PC-9 (cell line): ENCODE measurements at regions of chr1 and their contacts with region 1.

Region 1: GRCh38 chr1:198937231-198938031 is 298.6 kb downstream of the PTPRC start:
- DNase-seq: peak; percentile 41 to 72
- H3K4me3 ChIP-seq: peak overlapping the region; percentile 50
- H3K27ac ChIP-seq: 0 out of 2 replicates have a peak overlapping the region, but pooled peaks have one; percentile 24
- H3K4me1 ChIP-seq: peaks cover 14% of the 10 kb centered on the region
- H3K27me3 ChIP-seq: no peaks in the 10 kb centered on the region
- CTCF ChIP-seq: no peak

Region 2: GRCh38 chr1:198651650-198652400 is 285.6 kb before region 1 on chr1:
- CTCF ChIA-PET with region 1: no interaction called
- POLR2A ChIA-PET with region 1: interaction called, 13 read pairs
- intact Hi-C with region 1: no loop called
- DNase-seq: no peak
- H3K4me3 ChIP-seq: no peak overlapping the region
- H3K27ac ChIP-seq: no peak overlapping the region
- H3K4me1 ChIP-seq: peaks cover 8% of the 10 kb centered on the region
- H3K27me3 ChIP-seq: no peaks in the 10 kb centered on the region
- CTCF ChIP-seq: no peak

Region 3: DNA sequence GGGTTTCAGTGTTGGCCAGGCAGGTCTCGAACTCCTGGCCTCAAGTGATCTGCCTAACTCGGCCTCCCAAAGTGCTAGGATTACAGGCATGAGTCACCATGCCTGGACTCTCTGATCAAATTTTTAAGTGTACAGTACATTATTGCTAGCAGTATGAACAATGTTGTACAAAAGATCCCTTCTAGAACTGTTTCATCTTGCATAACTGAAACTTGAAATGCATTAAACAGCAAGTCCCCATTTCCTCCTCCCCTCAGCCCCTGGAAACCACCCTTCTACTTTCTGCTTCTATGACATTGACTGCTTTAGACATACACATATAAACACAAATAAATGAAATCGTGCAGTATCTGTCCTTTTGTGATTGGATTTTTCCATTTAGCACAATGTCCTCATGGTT is 164.8 kb after region 1 on chr1:
- CTCF ChIA-PET with region 1: no interaction called
- POLR2A ChIA-PET with region 1: interaction called, 10 read pairs
- intact Hi-C with region 1: no loop called
- DNase-seq: no peak
- H3K4me3 ChIP-seq: no peak overlapping the region
- H3K27ac ChIP-seq: no peak overlapping the region
- H3K4me1 ChIP-seq: no peaks in the 10 kb centered on the region
- H3K27me3 ChIP-seq: no peaks in the 10 kb centered on the region
- CTCF ChIP-seq: no peak

Region 4: DNA sequence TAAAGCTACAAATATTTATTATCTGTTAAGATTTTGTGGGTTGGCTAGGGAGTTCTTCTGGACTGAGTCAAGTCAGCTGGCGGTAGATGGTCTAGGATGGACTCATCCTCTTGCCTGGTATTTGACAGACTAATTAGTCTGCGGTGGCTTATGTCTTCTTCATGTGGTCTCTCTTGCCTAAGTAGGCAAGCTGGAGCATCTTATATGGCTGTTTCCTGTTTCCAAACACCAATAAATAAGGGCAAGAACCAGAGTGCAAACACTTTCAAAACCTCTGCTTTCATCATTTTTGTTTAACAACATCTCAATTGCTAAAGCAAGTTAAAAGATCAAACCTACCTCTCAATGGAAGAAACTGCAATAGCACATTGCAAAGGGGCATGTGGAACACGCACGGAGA is 186.2 kb after region 1 on chr1:
- CTCF ChIA-PET with region 1: no interaction called
- POLR2A ChIA-PET with region 1: no interaction called
- intact Hi-C with region 1: no loop called
- DNase-seq: no peak
- H3K4me3 ChIP-seq: no peak overlapping the region
- H3K27ac ChIP-seq: no peak overlapping the region
- H3K4me1 ChIP-seq: no peaks in the 10 kb centered on the region
- H3K27me3 ChIP-seq: no peaks in the 10 kb centered on the region
- CTCF ChIP-seq: no peak

Region 5: DNA sequence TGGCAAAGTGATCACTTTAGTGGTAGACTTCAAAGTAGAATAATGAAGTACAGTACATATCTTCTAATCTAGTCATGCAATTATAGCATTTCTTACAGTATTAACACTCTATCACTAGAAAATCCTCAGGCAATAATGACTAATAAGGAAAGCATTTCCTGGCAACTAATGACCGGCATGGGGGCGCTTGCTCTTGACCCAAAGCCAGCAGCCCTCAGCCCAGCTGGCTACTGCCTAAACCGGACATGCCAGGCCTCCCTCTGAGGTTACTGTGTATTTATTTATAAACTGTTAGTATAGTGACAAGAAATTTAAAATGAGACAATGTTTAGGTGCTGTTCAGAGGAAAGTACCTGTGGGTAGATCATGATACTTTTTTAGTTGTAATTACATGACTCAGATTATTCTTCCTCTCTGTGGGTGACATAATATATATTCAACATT is 335.2 kb after region 1 on chr1:
- CTCF ChIA-PET with region 1: no interaction called
- POLR2A ChIA-PET with region 1: no interaction called
- intact Hi-C with region 1: loop called (anchors 1 kb)
- DNase-seq: peak; percentile 89 to 96
- H3K4me3 ChIP-seq: no peak overlapping the region
- H3K27ac ChIP-seq: peak overlapping the region; percentile 98
- H3K4me1 ChIP-seq: peaks cover 52% of the 10 kb centered on the region
- H3K27me3 ChIP-seq: no peaks in the 10 kb centered on the region
- CTCF ChIP-seq: no peak

Region 6: DNA sequence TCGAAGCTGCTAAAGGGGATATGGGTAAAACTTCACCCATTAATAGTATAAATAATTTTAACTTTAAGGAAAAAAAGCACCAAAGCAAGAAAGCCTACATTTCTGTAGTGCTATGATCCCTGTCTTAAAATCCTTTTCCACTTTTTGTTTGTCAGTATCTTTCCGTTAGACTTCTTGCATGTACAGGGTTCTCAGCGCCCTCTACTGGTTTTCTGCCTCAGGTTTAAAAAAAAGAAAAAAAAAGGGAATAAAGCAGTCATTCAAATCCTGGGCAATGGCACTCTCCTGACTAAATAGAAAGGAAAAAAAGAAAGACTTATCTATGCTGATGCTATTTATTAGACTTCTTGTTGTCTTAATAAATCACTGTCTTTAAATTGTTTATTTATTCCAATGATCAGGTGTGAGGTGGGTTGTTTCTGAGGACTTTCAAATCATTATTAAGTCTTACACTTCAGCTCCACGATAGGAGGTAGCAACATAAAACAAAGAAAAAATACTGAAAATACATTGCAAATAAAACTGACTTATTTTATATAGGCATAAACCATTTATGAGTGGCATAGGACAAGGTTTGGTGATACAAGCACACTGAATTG is 614.6 kb after region 1 on chr1:
- CTCF ChIA-PET with region 1: no interaction called
- POLR2A ChIA-PET with region 1: no interaction called
- intact Hi-C with region 1: loop called (anchors 5 kb)
- DNase-seq: peak; percentile 36 to 37
- H3K4me3 ChIP-seq: no peak overlapping the region
- H3K27ac ChIP-seq: no peak overlapping the region
- H3K4me1 ChIP-seq: no peaks in the 10 kb centered on the region
- H3K27me3 ChIP-seq: no peaks in the 10 kb centered on the region
- CTCF ChIP-seq: peak; percentile 87